PC-3 (cell line): ENCODE measurements at regions of chr13 and their contacts with region 1.

Region 1: DNA sequence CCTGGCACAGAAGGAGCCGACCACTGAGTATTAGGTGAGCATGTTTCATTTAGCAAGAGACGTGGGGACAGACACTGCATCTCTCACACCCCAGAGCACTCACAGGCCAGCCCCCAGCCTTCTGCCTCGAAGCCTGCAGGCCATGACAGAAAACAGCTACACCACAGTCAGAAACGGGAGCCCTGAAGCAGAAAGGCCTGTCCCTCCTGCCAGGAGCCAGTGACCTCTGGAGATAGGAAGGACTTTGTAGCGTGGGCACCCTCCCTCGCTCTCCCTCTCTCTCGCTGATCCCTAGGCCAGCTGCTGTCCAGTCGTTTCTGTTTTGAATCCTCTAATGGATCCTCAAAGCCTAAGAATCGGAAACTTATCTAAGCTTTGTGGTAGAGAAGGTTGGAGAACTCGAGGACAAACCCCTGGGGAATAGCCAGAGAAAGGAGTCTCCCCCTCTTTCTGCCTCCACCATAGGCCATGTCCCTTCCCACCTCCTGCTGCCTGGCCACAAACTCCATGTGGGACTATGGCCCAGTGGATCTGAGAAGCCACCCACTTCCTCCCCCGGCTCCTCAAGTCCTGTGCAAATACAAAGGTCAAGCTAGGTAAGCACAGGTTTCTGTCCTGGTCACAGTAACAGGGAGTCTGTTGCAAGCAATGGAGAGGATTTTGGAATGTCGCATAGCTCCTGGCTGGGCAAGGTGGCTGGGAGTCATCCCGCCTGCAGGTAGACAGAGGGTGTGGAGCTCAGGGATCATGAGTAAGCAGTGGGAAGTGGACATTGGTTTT is 95.1 kb downstream of the NUFIP1 start:
- DNase-seq: peak; percentile 15
- ATAC-seq: no peak
- H3K4me3 ChIP-seq: no peak overlapping the region
- H3K27ac ChIP-seq: no peak overlapping the region
- H3K4me1 ChIP-seq: peaks cover 12% of the 10 kb centered on the region
- H3K27me3 ChIP-seq: no peaks in the 10 kb centered on the region
- CTCF ChIP-seq: no peak

Region 2: GRCh38 chr13:44734201-44734707 is 159.9 kb before region 1 on chr13:
- CTCF ChIA-PET with region 1: interaction called, 18 read pairs
- POLR2A ChIA-PET with region 1: no interaction called
- intact Hi-C with region 1: no loop called
- DNase-seq: peak; percentile 69
- ATAC-seq: peak; percentile 95
- H3K4me3 ChIP-seq: no peak overlapping the region
- H3K27ac ChIP-seq: no peak overlapping the region
- H3K4me1 ChIP-seq: peaks cover 13% of the 10 kb centered on the region
- H3K27me3 ChIP-seq: no peaks in the 10 kb centered on the region
- CTCF ChIP-seq: no peak